PC-3 (cell line): ENCODE measurements at regions of chr2 and their contacts with region 1.

Region 1: DNA sequence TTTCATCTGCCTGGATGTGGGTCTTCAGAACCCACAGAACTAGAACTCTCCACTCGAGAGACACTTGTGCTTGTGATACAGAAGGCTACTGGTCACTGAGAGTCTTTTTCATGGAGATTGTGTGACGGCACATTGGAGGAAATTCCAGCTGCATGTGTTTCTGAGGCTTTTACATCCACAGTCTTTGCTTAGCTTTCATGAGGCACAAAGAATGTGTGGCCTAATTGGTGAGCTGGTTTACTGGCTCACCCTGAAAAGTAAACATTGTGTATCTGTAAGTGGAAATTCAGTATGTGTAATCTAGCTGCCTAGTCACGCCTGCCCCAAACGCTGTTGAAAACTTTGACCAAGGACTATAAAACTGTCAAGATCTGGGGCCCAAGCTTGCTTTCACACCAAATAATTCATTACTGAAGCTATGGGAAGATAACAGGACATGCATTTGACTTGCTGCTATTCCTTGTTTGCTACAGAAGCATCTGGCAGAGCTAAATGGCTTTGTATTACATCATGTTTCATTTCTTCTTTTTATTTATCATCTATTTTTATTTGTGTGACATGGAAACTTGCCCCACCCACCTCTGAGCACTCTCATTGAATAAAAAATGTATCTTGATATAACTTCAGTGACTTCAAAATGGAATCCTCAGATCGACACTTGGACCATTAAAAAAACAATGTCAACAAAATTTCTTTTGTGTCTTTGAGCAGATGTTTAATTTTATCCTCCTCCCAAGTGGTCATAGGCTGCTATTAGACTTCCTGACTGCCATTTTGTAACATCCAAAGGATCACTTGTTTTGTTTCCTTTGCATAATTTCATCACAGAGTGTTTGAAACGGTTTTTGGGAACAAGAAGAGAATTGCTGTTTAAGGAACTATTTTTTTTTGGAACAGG is 80.2 kb downstream of the EFEMP1 start:
- DNase-seq: peak; percentile 94
- ATAC-seq: peak; percentile 77
- H3K4me3 ChIP-seq: no peak overlapping the region; the same call in 1 of the 2 replicates
- H3K27ac ChIP-seq: peak overlapping the region; percentile 95
- H3K4me1 ChIP-seq: peaks cover 64% of the 10 kb centered on the region
- H3K27me3 ChIP-seq: no peaks in the 10 kb centered on the region
- CTCF ChIP-seq: no peak

Region 2: GRCh38 chr2:54558188-54559005 is 1284.9 kb before region 1 on chr2:
- CTCF ChIA-PET with region 1: no interaction called
- POLR2A ChIA-PET with region 1: no interaction called
- intact Hi-C with region 1: no loop called
- DNase-seq: peak; percentile 74
- ATAC-seq: peak; percentile 61
- H3K4me3 ChIP-seq: peak overlapping the region; percentile 78
- H3K27ac ChIP-seq: peak overlapping the region; percentile 96
- H3K4me1 ChIP-seq: peaks cover 37% of the 10 kb centered on the region
- H3K27me3 ChIP-seq: no peaks in the 10 kb centered on the region
- CTCF ChIP-seq: no peak

Region 3: DNA sequence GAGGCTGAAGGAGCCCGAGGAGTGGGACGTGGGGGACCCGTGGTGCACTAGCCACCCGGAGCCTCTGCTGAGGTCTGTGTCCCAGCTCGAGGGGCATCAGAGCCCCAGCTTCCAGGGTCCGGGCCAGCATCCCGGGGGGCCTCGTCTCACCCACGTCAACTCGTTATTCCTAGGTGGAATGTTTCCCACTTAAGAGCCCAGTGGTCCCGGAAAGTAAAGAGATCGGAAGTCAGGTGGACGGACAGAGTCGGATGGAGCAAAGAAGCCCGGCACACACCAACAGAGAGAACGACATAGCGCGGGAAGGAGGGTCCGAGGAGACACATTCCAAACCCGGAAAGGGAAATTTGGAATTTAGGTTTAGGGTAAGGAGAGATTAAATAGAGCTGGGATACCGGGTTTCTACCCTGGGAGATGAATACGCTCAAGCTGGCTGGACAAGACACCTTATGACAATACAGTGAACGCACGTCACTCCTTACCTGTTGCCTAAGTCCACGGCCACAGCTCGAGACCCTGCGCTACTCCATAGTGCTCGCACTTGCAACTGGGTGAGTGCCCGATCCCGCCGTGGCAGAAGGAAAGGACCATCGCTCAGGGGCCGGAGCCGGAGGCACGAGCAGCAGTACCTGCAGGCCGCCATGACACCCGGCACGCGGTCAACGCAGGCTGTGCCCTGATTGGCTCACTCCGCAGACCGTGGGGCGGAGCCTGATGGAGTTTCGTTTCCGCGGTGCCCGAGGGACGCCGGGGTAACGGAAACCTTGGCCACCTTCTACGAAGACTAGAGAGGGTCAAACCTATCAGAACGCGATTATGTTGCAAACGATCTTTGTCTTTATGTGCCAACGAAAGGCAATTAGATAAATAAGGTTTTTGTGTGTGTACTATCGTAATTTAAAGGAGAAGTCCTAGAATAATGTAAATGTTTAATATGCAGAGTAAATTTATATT is 149.9 kb before region 1 on chr2 and contains the start of gene PNPT1:
- CTCF ChIA-PET with region 1: no interaction called
- POLR2A ChIA-PET with region 1: no interaction called
- intact Hi-C with region 1: loop called (anchors 10 kb)
- DNase-seq: peak; percentile 96
- ATAC-seq: peak; percentile 99
- H3K4me3 ChIP-seq: peak within 1 kb of the TSS; percentile 87
- H3K27ac ChIP-seq: peak within 1 kb of the TSS; percentile 19; the same call in 1 of the 2 replicates
- H3K4me1 ChIP-seq: peaks cover 8% of the 10 kb centered on the region; the same call in 1 of the 2 replicates
- H3K27me3 ChIP-seq: no peaks in the 10 kb centered on the region
- CTCF ChIP-seq: no peak
- total RNA-seq, gene PNPT1: 38.8 and 43.6 TPM in 2 replicates

Region 4: DNA sequence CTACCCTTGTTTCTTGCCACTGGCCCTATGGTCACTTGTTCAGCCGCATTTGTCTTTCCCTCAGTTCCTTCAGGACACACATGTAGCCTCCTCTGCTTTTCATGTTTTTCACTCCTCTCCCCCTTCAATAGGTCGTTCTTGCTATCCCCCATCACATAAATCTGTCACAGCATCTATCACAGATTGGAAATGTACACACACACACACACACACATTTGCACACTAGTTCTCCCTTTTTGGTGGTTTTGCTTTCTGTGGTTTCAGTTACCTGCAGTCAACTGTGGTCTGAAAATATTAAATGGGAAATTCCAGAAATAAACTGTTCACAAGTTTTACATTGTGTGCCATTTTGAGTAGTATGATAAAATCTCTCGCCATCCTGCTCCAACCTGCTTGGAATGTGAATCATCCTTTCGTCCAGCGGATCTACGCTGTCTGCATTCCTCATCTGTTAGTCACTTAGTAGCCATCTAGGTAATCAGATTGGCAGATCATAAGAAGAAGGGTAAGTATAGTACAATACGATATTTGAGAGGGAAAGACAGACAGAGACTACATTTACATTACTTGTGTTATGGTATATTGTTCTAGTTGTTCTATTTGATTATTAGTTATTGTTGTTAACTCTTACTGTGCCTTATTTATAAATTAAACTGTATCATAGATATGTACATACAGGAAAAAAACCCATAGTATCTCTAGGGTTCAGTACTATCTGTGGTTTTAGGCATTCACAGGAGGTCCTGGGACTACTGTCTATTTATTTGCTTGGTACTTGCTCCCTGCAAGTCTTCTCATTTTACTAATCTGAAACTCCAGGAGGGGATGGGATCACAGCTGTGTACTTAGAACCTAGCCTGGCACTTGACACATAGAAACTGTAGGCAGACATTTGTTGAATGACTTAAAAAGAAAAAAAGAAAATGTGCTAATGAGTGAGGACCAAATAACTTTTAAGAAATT is 63.6 kb before region 1 on chr2:
- CTCF ChIA-PET with region 1: no interaction called
- POLR2A ChIA-PET with region 1: no interaction called
- intact Hi-C with region 1: loop called (anchors 1 kb)
- DNase-seq: peak; percentile 98
- ATAC-seq: peak; percentile 99
- H3K4me3 ChIP-seq: peak overlapping the region; percentile 28; the same call in 1 of the 2 replicates
- H3K27ac ChIP-seq: peak overlapping the region; percentile 83
- H3K4me1 ChIP-seq: peaks cover 28% of the 10 kb centered on the region
- H3K27me3 ChIP-seq: no peaks in the 10 kb centered on the region
- CTCF ChIP-seq: no peak

Region 5: GRCh38 chr2:55856936-55857335 is 13.6 kb after region 1 on chr2:
- CTCF ChIA-PET with region 1: no interaction called
- POLR2A ChIA-PET with region 1: no interaction called
- intact Hi-C with region 1: loop called (anchors 1 kb)
- DNase-seq: peak; percentile 94
- ATAC-seq: peak; percentile 89
- H3K4me3 ChIP-seq: peak overlapping the region; percentile 19; the same call in 1 of the 2 replicates
- H3K27ac ChIP-seq: peak overlapping the region; percentile 83
- H3K4me1 ChIP-seq: peaks cover 28% of the 10 kb centered on the region
- H3K27me3 ChIP-seq: no peaks in the 10 kb centered on the region
- CTCF ChIP-seq: no peak

Region 6: DNA sequence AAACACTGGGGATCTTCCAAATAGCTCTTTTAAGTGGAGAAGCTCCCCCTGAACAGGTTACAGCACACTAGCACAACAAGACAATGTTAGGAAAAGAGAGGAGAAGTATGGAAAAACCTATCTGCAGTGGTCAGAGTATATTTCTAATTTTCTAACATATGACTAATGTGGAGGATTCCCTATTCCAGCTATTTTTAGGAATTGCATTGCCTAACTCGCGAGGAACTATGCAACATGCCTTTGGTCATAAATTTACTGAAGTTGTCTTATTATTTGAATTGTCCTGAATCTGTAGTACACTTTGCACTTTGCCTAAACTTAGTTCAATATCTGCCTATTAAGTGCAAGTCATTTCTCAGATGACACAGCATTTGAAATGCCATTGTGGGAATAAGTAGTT is 721.8 kb after region 1 on chr2:
- CTCF ChIA-PET with region 1: no interaction called
- POLR2A ChIA-PET with region 1: no interaction called
- intact Hi-C with region 1: no loop called
- DNase-seq: no peak
- ATAC-seq: no peak
- H3K4me3 ChIP-seq: no peak overlapping the region
- H3K27ac ChIP-seq: no peak overlapping the region
- H3K4me1 ChIP-seq: no peaks in the 10 kb centered on the region
- H3K27me3 ChIP-seq: no peaks in the 10 kb centered on the region
- CTCF ChIP-seq: no peak